ENCODE measurements at regions of chr3 and their contacts with region 1.

Region 1: DNA sequence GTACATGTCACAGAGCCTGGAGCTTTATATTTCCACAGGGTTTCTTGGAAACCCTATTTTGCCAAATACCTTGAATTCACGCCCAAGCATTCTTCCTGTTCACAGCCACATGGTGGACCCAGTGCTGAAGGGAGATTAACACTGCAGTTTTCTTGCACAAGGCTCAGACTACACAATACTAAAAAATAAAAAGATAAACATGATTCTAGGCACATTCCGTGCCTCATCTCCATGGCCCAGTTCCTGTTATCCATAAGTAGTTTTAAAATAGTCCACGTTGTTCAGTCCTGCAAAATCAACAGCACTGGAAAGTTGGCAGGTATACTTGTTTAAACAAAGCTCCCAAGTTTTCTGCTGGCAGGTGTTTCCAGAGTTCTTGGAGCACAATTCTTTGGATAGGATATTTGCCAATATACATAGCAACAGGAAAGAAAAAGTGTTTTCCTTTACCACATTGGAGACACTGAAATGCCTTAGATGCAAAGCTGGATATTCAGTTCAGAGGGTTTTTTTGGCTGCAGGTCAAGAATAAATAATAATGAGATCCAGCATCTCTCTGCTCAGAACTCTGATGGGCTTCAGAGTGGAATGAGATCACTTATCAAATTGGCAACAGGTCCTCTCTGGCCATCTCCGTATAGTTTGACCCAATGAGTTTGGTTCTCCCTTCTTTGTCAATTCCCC is 88.1 kb upstream of the TGFBR2 start:
- DNase-seq: no peak
- ATAC-seq: peak; percentile 95

Region 2: DNA sequence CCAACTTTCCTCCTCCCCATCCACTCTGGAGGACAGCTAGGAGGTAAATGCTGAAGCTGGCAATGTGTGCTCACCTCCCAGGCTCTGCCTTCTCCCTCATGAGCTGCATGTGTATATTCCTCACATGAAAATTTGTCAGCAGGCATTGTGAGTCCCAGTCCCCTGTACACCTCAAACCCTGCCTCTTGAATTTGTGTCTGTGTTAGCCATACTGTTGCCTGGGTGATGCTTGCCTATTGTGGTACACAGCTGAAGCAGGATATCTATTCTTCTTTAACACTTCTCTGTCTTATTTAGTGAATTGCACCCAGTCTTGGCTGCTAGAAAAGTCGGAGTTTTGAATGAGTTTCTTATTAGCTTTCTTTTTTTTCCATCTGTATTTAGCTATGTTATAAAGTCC is 497.9 kb before region 1 on chr3:
- intact Hi-C with region 1: no loop called
- DNase-seq: no peak
- ATAC-seq: no peak

Region 3: GRCh38 chr3:30440147-30440604 is 78.1 kb before region 1 on chr3:
- intact Hi-C with region 1: loop called (anchors 5 kb)
- DNase-seq: no peak
- ATAC-seq: peak; percentile 30

Region 4: GRCh38 chr3:30475038-30475808 is 43.1 kb before region 1 on chr3:
- intact Hi-C with region 1: no loop called
- DNase-seq: no peak
- ATAC-seq: no peak